Ovary (tissue), 10 donors: ENCODE measurements at regions of chr5 and their contacts with region 1.

Region 1: DNA sequence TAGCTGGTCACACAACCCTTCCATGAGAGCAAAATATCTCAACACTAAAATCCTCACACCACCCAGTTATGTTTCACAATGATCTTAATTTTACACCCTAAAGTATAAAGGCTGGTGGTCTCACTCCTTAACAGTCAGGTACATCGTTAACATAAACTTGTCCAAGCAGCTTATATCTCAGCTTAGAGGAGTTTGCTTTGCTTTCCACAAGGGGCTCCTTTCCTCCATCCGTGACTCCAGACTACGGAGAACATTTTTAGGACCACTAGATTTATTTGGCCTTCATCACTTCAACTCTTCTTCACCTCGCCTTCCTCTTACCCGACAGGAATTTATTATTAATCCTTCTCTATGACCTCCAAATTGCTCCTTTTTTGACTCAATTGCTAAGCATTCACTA is 1014.1 kb upstream of the NUDT12 start:
- DNase-seq: no peak
- H3K4me3 ChIP-seq: no peak overlapping the region
- H3K27ac ChIP-seq: no peak overlapping the region
- H3K4me1 ChIP-seq: no peaks in the 10 kb centered on the region
- H3K27me3 ChIP-seq: no peaks in the 10 kb centered on the region
- CTCF ChIP-seq: no peak
- EP300 ChIP-seq: no peak
- POLR2A ChIP-seq: no peak

Region 2: GRCh38 chr5:104652271-104652861 is 75.7 kb after region 1 on chr5:
- intact Hi-C with region 1: loop called in 1 of 4 experiments (anchors 2 kb)
- DNase-seq: no peak
- H3K4me3 ChIP-seq: no peak overlapping the region
- H3K27ac ChIP-seq: no peak overlapping the region
- H3K4me1 ChIP-seq: no peaks in the 10 kb centered on the region
- H3K27me3 ChIP-seq: no peaks in the 10 kb centered on the region
- CTCF ChIP-seq: no peak
- EP300 ChIP-seq: no peak
- POLR2A ChIP-seq: no peak